Caco-2 (cell line): ENCODE measurements at regions of chr6 and their contacts with region 1.

Region 1: DNA sequence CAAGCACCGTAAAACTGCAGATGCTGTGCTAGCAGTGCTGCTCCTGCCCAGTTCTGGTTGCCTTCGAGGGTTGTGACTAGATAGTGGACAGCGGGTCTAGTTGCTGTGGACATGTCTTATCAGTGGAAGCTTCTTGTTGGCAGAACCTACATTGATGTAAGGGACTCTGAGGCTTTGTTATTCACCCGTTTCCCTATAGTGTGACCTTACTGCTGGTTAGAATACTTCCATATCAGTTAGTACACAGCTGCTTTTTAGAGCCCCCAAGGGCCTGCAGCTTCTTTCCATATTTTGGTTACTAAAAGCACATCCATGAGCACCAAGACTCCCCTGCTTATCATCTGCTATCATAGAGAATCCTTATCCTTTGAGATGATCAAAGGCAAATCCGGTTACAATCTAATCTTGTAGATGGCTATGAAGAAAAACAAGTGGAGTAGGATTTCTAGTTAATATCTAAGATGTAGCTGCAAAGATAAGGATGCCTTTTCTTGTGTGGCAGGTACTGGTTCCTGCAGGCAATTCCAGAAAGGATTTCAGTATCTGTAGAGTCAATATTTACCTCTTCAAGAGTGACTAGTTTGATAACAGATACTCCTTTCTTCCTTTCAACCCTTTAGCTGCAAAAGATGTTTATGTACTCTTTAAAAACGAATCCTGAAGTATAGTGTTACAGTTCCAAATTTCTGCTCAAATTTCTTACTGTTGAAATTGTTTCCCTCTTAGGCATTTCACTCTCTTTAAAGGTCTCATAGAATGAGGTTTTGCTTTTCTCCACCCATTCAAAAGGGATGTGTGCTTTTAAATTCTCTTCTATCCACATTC is 163.6 kb downstream of the JARID2 start:
- DNase-seq: peak; percentile 78 to 85
- H3K4me3 ChIP-seq: no peak overlapping the region
- H3K4me3 Mint-ChIP-seq: peak overlapping the region; percentile 58
- H3K27ac Mint-ChIP-seq: peak overlapping the region; percentile 38
- H3K4me1 ChIP-seq: peaks cover 33% of the 10 kb centered on the region
- H3K4me1 Mint-ChIP-seq: peaks cover 49% of the 10 kb centered on the region
- H3K27me3 ChIP-seq: no peaks in the 10 kb centered on the region
- H3K27me3 Mint-ChIP-seq: no peaks in the 10 kb centered on the region
- CTCF ChIP-seq: no peak

Region 2: GRCh38 chr6:15194453-15194852 is 215.1 kb before region 1 on chr6:
- CTCF ChIA-PET with region 1: no interaction called
- POLR2A ChIA-PET with region 1: no interaction called
- intact Hi-C with region 1: no loop called
- DNase-seq: no peak
- H3K4me3 ChIP-seq: no peak overlapping the region
- H3K4me3 Mint-ChIP-seq: no peak overlapping the region
- H3K27ac Mint-ChIP-seq: no peak overlapping the region
- H3K4me1 ChIP-seq: no peaks in the 10 kb centered on the region
- H3K4me1 Mint-ChIP-seq: no peaks in the 10 kb centered on the region
- H3K27me3 ChIP-seq: no peaks in the 10 kb centered on the region
- H3K27me3 Mint-ChIP-seq: no peaks in the 10 kb centered on the region
- CTCF ChIP-seq: no peak

Region 3: GRCh38 chr6:15431762-15432483 is 22.4 kb after region 1 on chr6:
- CTCF ChIA-PET with region 1: no interaction called
- POLR2A ChIA-PET with region 1: interaction called, 3 read pairs
- intact Hi-C with region 1: loop called (anchors 1 kb)
- DNase-seq: peak; percentile 59 to 62
- H3K4me3 ChIP-seq: no peak overlapping the region
- H3K4me3 Mint-ChIP-seq: peak overlapping the region; percentile 27
- H3K27ac Mint-ChIP-seq: peak overlapping the region; percentile 58
- H3K4me1 ChIP-seq: peaks cover 43% of the 10 kb centered on the region
- H3K4me1 Mint-ChIP-seq: peaks cover 29% of the 10 kb centered on the region
- H3K27me3 ChIP-seq: no peaks in the 10 kb centered on the region
- H3K27me3 Mint-ChIP-seq: no peaks in the 10 kb centered on the region
- CTCF ChIP-seq: no peak

Region 4: GRCh38 chr6:15441215-15441868 is 31.8 kb after region 1 on chr6:
- CTCF ChIA-PET with region 1: no interaction called
- POLR2A ChIA-PET with region 1: no interaction called
- intact Hi-C with region 1: loop called (anchors 2 kb)
- DNase-seq: peak; percentile 40 to 72
- H3K4me3 ChIP-seq: no peak overlapping the region
- H3K4me3 Mint-ChIP-seq: no peak overlapping the region
- H3K27ac Mint-ChIP-seq: no peak overlapping the region
- H3K4me1 ChIP-seq: peaks cover 6% of the 10 kb centered on the region
- H3K4me1 Mint-ChIP-seq: peaks cover 29% of the 10 kb centered on the region
- H3K27me3 ChIP-seq: no peaks in the 10 kb centered on the region
- H3K27me3 Mint-ChIP-seq: no peaks in the 10 kb centered on the region
- CTCF ChIP-seq: peak; percentile 72 to 81